Caco-2 (cell line): ENCODE measurements at regions of chr1 and their contacts with region 1.

Region 1: DNA sequence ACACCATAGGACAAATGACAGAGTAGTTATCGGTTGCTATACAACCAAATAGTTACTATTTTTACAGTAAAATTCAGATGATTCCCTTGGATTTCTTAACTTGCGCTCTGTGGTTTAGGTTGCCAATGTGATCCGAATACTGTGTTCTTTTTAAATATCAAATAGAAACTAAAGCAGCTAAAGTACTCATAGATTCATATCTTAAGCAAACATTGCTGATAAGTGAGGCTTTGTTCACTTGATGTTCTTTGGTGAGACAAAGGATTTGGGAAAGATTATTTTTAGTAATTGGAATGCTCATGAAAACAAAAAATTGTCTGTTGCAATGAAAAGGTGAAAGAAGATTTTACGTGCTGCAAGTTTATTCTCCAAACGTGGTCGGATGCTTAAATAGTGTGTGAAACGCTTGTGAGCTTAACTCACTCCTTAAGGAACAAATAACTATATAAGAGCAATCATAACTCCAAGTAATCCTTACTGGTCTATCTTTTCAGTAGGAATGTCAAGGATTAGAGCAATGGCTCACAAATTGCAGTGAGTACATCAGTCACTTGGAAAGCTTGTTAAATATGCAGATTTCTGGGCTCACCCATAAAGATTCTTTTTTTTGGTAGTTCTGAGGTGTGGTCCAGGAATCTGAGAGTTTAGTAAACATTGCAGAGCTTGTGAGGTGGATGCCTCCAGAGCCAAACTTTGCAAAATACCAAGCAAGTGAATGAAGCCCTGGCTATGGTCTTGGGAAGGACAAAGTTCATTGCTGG is 31.8 kb upstream of the PDC start:
- DNase-seq: peak; percentile 71 to 72
- H3K4me3 ChIP-seq: no peak overlapping the region
- H3K4me3 Mint-ChIP-seq: peak overlapping the region; percentile 64
- H3K27ac Mint-ChIP-seq: peak overlapping the region; percentile 86
- H3K4me1 ChIP-seq: peaks cover 64% of the 10 kb centered on the region
- H3K4me1 Mint-ChIP-seq: peaks cover 48% of the 10 kb centered on the region
- H3K27me3 ChIP-seq: no peaks in the 10 kb centered on the region
- H3K27me3 Mint-ChIP-seq: no peaks in the 10 kb centered on the region
- CTCF ChIP-seq: no peak

Region 2: DNA sequence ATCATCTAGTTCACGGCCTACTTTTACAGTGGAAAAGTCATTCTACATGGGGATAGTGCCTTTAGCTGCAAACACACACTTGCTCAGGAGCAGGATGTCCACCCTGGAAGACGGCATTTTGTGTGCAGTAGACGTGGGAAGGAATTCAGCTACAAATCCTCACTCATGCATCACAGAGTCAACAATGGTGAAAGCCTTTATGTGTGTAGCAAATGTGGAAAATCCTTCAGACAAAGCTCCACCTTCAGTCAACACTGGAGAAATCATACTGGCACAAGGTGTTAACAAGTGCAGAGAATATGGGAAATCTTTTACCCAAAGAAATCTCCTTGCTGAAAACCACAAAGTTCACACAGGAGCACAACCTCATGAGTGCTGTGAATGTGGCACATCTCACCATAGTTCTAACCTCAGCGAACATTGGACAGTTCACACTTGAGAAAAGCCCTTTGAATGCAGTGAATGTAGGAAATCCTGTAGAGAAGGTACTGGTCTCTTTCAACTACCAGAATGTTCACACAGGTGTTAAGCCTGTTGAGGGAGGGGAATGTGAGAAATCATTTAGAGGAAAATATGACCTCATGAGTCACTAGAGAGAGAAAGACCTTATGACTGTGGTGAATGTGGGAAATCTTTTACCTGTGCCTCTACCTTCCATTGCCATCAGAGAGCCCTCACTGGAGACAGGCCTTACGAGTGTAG is 85.8 kb after region 1 on chr1:
- CTCF ChIA-PET with region 1: no interaction called
- POLR2A ChIA-PET with region 1: no interaction called
- intact Hi-C with region 1: loop called (anchors 2 kb)
- DNase-seq: peak; percentile 35 to 38
- H3K4me3 ChIP-seq: no peak overlapping the region
- H3K4me3 Mint-ChIP-seq: no peak overlapping the region
- H3K27ac Mint-ChIP-seq: peak overlapping the region; percentile 77
- H3K4me1 ChIP-seq: peaks cover 22% of the 10 kb centered on the region
- H3K4me1 Mint-ChIP-seq: no peaks in the 10 kb centered on the region
- H3K27me3 ChIP-seq: no peaks in the 10 kb centered on the region
- H3K27me3 Mint-ChIP-seq: no peaks in the 10 kb centered on the region
- CTCF ChIP-seq: no peak

Region 3: DNA sequence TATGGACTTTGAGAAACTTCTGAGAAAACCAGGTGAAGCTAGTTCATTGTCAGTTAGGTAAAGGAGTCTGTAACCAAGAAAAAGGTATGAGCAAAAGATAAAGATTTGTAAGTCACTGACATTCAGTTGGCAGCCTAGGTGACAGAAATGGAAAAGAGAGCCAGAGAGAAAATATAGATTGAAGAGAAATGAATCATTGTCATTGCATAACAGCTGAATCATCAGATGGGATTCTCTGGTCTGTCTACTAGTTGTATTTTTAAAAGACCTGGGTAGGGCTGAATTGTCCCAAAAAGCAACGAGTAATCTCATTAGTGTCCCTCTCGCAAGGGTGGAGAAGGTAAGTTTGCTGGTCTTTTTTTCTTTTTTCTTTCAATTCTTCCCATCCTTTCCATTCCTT is 150.9 kb after region 1 on chr1:
- CTCF ChIA-PET with region 1: no interaction called
- POLR2A ChIA-PET with region 1: no interaction called
- intact Hi-C with region 1: loop called (anchors 1 kb)
- DNase-seq: no peak
- H3K4me3 ChIP-seq: no peak overlapping the region
- H3K4me3 Mint-ChIP-seq: peak overlapping the region; percentile 6
- H3K27ac Mint-ChIP-seq: peak overlapping the region; percentile 93
- H3K4me1 ChIP-seq: peaks cover 30% of the 10 kb centered on the region
- H3K4me1 Mint-ChIP-seq: peaks cover 20% of the 10 kb centered on the region
- H3K27me3 ChIP-seq: no peaks in the 10 kb centered on the region
- H3K27me3 Mint-ChIP-seq: no peaks in the 10 kb centered on the region
- CTCF ChIP-seq: no peak

Region 4: DNA sequence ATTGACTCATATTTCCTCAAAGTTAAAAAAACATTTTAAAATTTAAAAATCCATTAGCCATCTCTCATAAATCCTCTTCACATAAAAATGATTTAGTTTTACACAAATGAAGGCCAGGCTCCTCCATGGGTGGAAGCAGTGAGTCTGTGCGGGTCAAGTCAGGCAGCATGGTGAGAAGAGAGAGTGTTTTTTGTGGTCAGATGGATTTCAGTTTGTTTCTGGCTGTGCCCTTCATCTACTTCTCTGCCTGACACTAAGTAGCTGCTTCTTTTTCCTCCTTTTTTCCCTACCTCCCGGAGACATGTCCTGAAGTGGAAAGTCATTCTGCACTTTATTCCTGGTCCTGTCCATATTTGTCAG is 346.3 kb after region 1 on chr1:
- CTCF ChIA-PET with region 1: no interaction called
- POLR2A ChIA-PET with region 1: no interaction called
- intact Hi-C with region 1: no loop called
- DNase-seq: no peak
- H3K4me3 ChIP-seq: no peak overlapping the region
- H3K4me3 Mint-ChIP-seq: no peak overlapping the region
- H3K27ac Mint-ChIP-seq: no peak overlapping the region
- H3K4me1 ChIP-seq: peaks cover 6% of the 10 kb centered on the region; the same call in 1 of the 2 replicates
- H3K4me1 Mint-ChIP-seq: peaks cover 14% of the 10 kb centered on the region
- H3K27me3 ChIP-seq: no peaks in the 10 kb centered on the region
- H3K27me3 Mint-ChIP-seq: no peaks in the 10 kb centered on the region
- CTCF ChIP-seq: no peak